Heart right ventricle (tissue), 16 donors: ENCODE measurements at regions of chr2 and their contacts with region 1.

Region 1: GRCh38 chr2:197011799-197012641 is 85.5 kb upstream of the PGAP1 start:
- DNase-seq: peak in 1 of 2 donors; percentile 32
- ATAC-seq: peak in 7 of 8 donors; percentile 76 to 82 (median 76)
- H3K4me3 ChIP-seq: no peak overlapping the region
- H3K27ac ChIP-seq: peak overlapping the region in 2 of 10 donors; percentile 10 to 49
- H3K4me1 ChIP-seq: peaks cover 0 to 7% (median 0%) of the 10 kb centered on the region in 9 donors
- H3K27me3 ChIP-seq: no peaks in the 10 kb centered on the region
- CTCF ChIP-seq: peak; percentile 65 to 90 (median 83)

Region 2: DNA sequence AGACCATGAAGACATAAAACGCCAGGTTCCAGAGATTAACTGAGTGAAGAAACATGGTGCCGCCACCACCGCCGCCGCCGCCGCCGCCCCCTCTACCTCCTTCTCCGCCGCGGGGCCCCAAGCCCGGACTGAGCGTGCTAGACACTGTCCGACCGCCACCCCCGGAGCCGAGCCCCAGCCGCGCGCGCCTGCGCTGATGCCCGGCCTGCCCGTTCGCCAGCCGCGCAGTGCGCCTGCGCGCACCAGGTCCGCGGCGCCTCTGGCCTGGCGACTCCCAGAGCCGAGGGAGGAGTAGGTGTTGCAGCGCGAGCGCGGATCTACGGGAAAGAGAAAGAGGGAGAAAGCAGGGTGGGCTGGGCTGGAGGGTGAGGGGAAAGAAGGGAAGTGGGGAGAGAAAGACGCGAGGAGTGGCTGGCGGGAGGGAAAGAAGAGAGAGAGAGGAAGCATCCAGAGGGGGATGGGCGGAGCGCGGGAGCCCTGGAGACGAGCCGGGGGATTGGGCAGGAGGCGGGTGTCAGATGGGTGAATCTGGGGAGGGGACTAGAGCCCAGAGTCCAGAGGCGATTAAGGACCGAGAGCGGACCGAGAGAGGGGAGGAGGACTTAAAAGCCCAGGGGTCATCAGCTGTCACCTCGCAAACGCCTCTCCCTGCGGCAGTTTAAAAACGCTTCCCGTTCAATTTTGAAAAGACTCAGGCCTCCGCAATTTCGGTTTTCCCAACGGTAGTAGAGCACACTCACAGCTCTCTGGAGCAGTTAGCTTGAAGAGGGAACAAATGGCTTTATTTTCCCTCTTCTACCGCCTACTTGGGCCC is 85.3 kb before region 1 on chr2 and contains the start of gene PGAP1:
- intact Hi-C with region 1: loop called in 1 of 10 experiments (anchors 10 kb)
- DNase-seq: peak; percentile 89 to 92
- ATAC-seq: peak; percentile 97 to 100 (median 98)
- H3K4me3 ChIP-seq: peak within 1 kb of the TSS; percentile 69 to 93 (median 84)
- H3K27ac ChIP-seq: peak within 1 kb of the TSS; percentile 25 to 93 (median 88)
- H3K4me1 ChIP-seq: peaks cover 0 to 34% (median 13%) of the 10 kb centered on the region in 9 donors
- H3K27me3 ChIP-seq: no peaks in the 10 kb centered on the region
- CTCF ChIP-seq: no peak
- total RNA-seq, gene PGAP1: 4.8 to 9.8 (median 5.8) TPM

Region 3: GRCh38 chr2:197057959-197058358 is 45.9 kb after region 1 on chr2:
- intact Hi-C with region 1: no loop called
- DNase-seq: no peak
- ATAC-seq: no peak
- H3K4me3 ChIP-seq: no peak overlapping the region
- H3K27ac ChIP-seq: no peak overlapping the region
- H3K4me1 ChIP-seq: peaks cover 0 to 4% (median 0%) of the 10 kb centered on the region in 9 donors
- H3K27me3 ChIP-seq: no peaks in the 10 kb centered on the region
- CTCF ChIP-seq: peak in 1 of 9 donors; percentile 13

Region 4: DNA sequence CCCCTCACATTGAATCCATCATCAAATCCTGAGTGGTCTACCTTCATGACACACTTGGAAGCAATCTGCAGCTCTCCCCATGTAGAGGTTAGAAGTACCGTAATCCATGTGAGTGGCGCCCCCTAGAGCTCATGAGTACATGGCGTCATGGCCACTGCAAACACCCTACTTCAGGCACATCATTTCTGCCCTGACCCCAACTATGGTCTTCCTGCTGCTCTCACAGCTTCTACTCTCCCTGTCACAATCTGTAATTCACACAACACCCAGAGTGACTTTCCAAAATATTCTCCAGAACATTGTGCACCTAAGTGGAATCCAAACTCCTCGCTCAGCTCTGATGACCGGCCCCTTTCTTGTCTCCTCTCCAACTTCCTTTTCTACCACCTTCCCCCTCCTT is 156.7 kb after region 1 on chr2:
- intact Hi-C with region 1: loop called in 5 of 10 experiments (anchors 5 to 10 kb)
- DNase-seq: peak; percentile 40 to 46
- ATAC-seq: peak in 6 of 8 donors; percentile 43 to 75 (median 64)
- H3K4me3 ChIP-seq: no peak overlapping the region
- H3K27ac ChIP-seq: no peak overlapping the region
- H3K4me1 ChIP-seq: peaks cover 0 to 22% (median 8%) of the 10 kb centered on the region in 9 donors
- H3K27me3 ChIP-seq: no peaks in the 10 kb centered on the region
- CTCF ChIP-seq: peak; percentile 21 to 71 (median 54)

Region 5: DNA sequence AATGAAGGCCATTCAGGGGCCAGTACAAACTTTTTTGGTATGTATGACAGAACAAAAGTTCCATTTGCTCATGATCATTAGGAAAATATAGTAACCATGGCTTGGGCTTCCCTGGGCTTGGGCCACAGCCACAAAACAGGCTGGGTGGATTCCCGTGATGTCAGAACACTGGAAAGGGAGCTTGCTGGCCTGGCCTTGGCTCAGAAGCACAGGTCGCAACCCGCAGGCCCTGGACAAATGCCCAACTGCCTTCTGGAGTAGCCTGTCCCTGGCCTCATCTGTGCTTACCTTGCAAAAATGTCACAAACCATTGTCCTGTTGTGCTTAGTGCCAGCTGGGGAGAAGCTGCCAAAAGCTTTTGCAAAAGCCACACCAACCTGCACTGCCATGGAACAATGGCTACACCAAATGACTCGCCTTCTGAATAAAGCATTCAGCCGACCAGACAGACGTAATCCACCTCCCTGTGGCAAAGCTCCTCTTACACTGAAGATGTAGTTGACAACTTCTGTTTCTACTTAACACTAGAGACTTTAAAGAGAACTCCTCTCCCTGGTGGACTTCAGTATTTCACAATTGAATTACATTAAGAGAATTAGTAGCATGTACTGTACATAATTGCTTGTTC is 173.1 kb after region 1 on chr2:
- intact Hi-C with region 1: loop called in 1 of 10 experiments (anchors 10 kb)
- DNase-seq: peak; percentile 87 to 89
- ATAC-seq: peak; percentile 81 to 99 (median 93)
- H3K4me3 ChIP-seq: no peak overlapping the region
- H3K27ac ChIP-seq: peak overlapping the region in 8 of 10 donors; percentile 3 to 70 (median 51)
- H3K4me1 ChIP-seq: peaks cover 0 to 27% (median 18%) of the 10 kb centered on the region in 9 donors
- H3K27me3 ChIP-seq: no peaks in the 10 kb centered on the region
- CTCF ChIP-seq: no peak

Region 6: GRCh38 chr2:197378494-197379307 is 366.7 kb after region 1 on chr2:
- intact Hi-C with region 1: loop called (anchors 2 to 10 kb)
- DNase-seq: peak in 1 of 2 donors; percentile 43
- ATAC-seq: peak in 7 of 8 donors; percentile 52 to 77 (median 69)
- H3K4me3 ChIP-seq: no peak overlapping the region
- H3K27ac ChIP-seq: no peak overlapping the region
- H3K4me1 ChIP-seq: peaks cover 0 to 6% (median 0%) of the 10 kb centered on the region in 9 donors
- H3K27me3 ChIP-seq: no peaks in the 10 kb centered on the region
- CTCF ChIP-seq: peak; percentile 51 to 90 (median 76)